ENCODE measurements at regions of chr18 and their contacts with region 1.

Region 1: DNA sequence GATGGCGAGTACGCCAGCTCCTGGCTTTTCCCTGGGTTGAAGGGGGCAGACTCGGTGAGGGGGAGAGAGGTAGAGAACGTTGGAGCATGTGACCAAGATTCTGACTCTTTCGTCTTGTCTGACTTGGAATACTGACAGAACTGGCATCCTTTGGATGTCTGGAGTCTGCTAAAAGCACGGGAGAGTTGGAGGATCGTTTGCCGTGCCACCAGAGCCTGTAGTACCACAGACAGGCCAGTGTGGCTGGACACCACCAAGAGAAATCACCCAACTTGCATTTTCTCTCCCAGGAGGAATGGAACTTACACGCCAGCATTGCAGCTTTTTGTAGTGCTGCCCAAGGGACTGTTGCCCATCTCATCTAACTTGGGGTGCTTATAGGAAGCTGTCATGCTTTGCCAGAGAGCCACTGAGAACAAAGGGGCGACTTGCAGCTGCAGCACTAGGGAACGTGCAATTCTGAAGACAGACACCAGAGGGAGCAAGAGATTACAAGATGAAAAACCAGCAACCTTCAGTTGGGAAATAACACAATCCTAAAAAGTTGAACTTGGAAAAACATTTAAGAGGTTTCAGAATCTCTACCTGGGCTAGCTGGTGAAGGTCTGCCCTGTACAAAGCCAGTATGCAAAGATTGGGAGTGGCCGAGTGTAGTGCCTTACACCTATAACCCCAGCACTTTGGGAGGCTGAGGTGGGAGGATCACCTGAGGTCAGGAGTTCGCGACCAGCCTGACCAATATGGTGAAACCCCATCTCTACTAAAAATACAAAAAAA is 24.1 kb downstream of the PSMG2 start:
- DNase-seq: peak; percentile 70
- ATAC-seq: peak; percentile 67
- H3K4me3 Mint-ChIP-seq: no peak overlapping the region
- H3K27ac Mint-ChIP-seq: no peak overlapping the region
- H3K4me1 Mint-ChIP-seq: peaks cover 1% of the 10 kb centered on the region
- H3K27me3 Mint-ChIP-seq: no peaks in the 10 kb centered on the region

Region 2: GRCh38 chr18:12420831-12421421 is 306.0 kb before region 1 on chr18:
- CTCF ChIA-PET with region 1: no interaction called
- DNase-seq: no peak
- ATAC-seq: no peak
- H3K4me3 Mint-ChIP-seq: peak overlapping the region; percentile 55
- H3K27ac Mint-ChIP-seq: peak overlapping the region; percentile 32
- H3K4me1 Mint-ChIP-seq: peaks cover 11% of the 10 kb centered on the region
- H3K27me3 Mint-ChIP-seq: no peaks in the 10 kb centered on the region

Region 3: DNA sequence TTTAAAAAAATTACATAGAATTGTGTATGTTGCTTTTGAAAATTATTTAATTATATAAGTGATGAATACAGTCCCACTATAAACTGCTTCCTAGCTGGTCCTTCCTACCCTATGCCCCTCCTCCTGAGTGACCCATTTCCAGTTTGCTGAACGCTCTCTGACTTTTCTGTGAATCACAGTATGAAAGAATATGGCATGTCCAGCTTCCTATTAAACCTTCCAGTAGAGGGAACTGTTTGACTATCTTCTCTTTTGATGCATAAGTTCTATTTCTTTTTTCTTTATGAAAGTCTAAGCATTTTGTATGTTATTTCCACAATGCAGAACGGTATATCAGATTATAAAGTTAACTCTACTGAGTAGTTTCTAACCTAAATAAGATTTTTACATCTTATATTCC is 17.1 kb after region 1 on chr18:
- CTCF ChIA-PET with region 1: interaction called, 17 read pairs
- DNase-seq: no peak
- ATAC-seq: peak; percentile 73
- H3K4me3 Mint-ChIP-seq: no peak overlapping the region
- H3K27ac Mint-ChIP-seq: no peak overlapping the region
- H3K4me1 Mint-ChIP-seq: peaks cover 5% of the 10 kb centered on the region
- H3K27me3 Mint-ChIP-seq: peaks cover 2% of the 10 kb centered on the region

Region 4: DNA sequence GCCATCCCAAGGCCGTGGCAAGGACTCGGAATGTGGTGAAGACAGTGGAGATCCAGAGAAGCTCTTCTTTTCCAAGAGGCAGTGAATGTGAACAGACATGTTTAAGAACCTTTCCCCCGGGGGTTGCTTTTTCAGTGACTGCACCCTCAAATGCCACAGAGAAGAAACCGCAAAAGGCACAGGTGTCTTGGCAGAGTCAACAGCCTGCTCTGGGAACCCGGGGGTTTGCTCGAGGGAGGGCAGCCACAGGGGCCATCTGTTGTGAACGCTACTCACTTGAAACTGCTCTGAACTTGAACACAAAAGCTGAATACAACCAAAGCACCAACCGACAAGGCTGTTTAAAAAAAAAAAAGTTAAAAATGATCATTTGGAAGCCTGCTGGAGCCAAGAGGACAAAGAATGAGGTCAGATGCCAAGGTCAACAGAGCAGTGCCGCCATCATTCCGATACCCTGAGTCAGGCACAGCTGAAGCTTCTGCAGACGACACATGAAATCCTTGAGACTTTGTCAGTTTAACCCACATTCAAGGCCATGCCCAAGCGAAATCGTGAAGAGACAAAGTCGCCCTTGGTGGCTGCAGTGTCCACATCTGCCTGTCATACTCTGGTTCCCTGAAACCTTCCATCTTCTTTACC is 23.2 kb after region 1 on chr18:
- CTCF ChIA-PET with region 1: interaction called, 17 read pairs
- DNase-seq: no peak
- ATAC-seq: no peak
- H3K4me3 Mint-ChIP-seq: no peak overlapping the region
- H3K27ac Mint-ChIP-seq: no peak overlapping the region
- H3K4me1 Mint-ChIP-seq: peaks cover 8% of the 10 kb centered on the region
- H3K27me3 Mint-ChIP-seq: no peaks in the 10 kb centered on the region